HEK293T (cell line): ENCODE measurements at regions of chr17 and their contacts with region 1.

Region 1: DNA sequence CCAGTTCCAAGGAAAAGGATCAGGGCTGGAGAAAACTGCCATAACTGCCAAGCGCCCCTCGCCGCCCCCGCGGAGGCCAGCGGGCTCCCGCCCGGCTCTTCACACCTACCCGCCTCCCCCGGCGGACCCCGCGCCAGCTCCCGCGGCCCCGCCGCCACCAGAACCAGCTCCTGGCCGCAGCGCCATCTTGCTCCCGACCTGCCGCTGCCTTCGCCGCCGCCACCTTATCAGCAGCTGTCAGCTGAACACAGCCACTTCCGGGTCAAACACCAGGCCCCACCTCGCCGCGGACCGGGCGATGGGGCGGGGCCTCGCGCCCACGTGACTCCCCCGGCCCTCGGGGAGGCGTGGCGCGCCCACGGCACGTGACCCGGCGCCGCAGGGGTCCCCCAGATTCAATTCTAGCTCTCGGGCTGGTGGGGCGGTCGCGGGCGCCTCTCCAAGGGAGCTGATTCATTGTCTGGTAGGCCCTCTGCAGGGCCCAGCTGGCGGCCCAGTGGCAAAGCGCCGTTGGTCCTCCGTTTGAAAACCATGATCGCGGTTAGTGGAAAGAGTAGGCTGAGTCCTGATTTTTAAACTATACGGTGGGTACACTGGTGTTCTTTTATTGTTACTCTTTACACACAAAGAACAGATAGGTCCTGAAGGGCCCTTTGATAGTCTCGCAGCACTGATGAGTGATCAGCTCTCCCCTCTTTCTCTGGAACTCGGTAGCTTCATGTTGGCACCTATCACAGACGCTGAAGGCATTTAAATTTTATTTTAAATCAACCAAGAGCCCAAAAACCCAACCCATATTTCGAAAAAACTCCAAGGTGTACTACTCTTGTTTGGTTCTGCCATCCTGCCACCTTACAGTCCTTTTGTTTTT is at the start of gene SYNRG:
- DNase-seq: peak; percentile 96

Region 2: DNA sequence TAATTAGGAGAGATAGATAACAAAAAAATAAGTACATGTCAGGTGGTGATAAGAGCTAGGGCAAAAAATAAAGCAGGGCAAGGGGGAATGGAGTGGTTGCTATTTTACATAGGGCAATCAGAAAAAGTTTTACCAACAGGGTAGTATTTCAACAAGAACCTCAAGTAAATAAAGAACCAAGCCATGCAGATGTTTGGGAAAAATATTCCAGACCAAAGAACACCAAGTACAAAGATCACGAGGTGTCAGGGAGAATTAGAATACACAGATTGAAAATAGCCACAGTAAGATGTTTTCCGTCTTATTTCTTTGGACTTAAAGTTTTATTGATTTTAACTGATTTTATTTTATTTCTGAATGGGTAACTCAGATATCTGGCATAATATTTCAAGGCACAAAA is 11.3 kb before region 1 on chr17:
- CTCF ChIA-PET with region 1: no interaction called
- POLR2A ChIA-PET with region 1: interaction called, 12 read pairs
- DNase-seq: no peak